ENCODE measurements at regions of chr2 and their contacts with region 1.

Region 1: DNA sequence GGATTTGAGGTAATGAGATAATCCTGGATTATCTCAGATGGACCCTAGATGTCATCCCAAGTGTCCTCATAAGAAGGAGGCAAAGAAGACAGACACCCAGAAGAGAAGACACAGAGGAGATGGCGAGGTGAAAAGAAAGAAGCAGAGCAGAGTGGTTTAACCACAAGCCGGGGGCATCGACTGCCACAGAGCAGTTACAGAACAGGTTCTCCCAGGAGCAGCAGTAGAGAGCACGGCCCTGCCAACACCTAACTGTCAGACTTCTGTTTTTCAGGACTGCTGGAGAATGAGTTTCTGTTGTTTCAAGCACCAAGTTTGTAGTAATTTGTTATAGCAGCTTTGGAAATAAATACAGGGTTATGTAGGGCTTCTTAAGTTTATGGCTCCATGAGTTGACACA is 437.0 kb downstream of the THSD7B start:
- DNase-seq: no peak
- H3K4me3 Mint-ChIP-seq: no peak overlapping the region
- H3K27ac Mint-ChIP-seq: no peak overlapping the region
- H3K4me1 Mint-ChIP-seq: no peaks in the 10 kb centered on the region
- H3K27me3 Mint-ChIP-seq: no peaks in the 10 kb centered on the region
- CTCF ChIP-seq: no peak

Region 2: GRCh38 chr2:136765736-136766323 is 436.5 kb before region 1 on chr2:
- CTCF ChIA-PET with region 1: no interaction called
- POLR2A ChIA-PET with region 1: no interaction called
- intact Hi-C with region 1: loop called (anchors 5 kb)
- DNase-seq: no peak
- H3K4me3 Mint-ChIP-seq: no peak overlapping the region
- H3K27ac Mint-ChIP-seq: no peak overlapping the region
- H3K4me1 Mint-ChIP-seq: no peaks in the 10 kb centered on the region
- H3K27me3 Mint-ChIP-seq: peaks cover 74% of the 10 kb centered on the region
- CTCF ChIP-seq: no peak